H1 (cell line): ENCODE measurements at regions of chr6 and their contacts with region 1.

Region 1: GRCh38 chr6:72218125-72218524 is 331.8 kb downstream of the RIMS1 start:
- DNase-seq: peak; percentile 46 to 61
- H3K4me3 ChIP-seq: no peak overlapping the region
- H3K27ac ChIP-seq: no peak overlapping the region
- H3K4me1 ChIP-seq: no peaks in the 10 kb centered on the region
- H3K27me3 ChIP-seq: no peaks in the 10 kb centered on the region
- CTCF ChIP-seq: peak; percentile 70 to 83 (median 81)
- EP300 ChIP-seq: no peak
- POLR2A ChIP-seq: no peak
- RAD21 ChIP-seq: peak; percentile 59 to 64

Region 2: GRCh38 chr6:72080260-72080941 is 137.7 kb before region 1 on chr6:
- CTCF ChIA-PET with region 1: no interaction called
- POLR2A ChIA-PET with region 1: no interaction called
- DNase-seq: no peak
- H3K4me3 ChIP-seq: no peak overlapping the region
- H3K27ac ChIP-seq: no peak overlapping the region
- H3K4me1 ChIP-seq: peaks cover 0 to 1% (median 0%) of the 10 kb centered on the region in 4 experiments; a peak in 3 of 7 replicates
- H3K27me3 ChIP-seq: no peaks in the 10 kb centered on the region
- CTCF ChIP-seq: no peak
- EP300 ChIP-seq: no peak
- POLR2A ChIP-seq: no peak
- RAD21 ChIP-seq: no peak; a peak in 1 of 4 replicates

Region 3: DNA sequence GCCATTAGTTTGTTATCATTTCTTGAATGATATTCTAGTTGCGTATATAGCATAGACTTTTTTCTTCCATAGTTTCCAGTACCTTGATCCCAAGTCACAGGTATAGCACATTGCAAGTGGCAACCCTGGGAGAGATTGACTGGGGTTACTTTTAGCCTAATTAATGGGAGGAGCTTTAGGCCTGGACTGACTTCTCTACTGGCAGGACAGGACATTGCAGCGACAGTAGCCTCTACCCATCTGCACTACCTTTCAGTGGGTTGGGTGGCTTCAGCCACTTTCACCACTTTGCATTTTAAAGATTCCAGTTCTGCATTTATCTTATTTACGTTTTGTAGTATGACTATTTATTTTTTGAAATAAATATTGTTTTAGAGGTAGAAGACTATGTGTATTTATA is 11.5 kb before region 1 on chr6:
- CTCF ChIA-PET with region 1: interaction called, 26 read pairs
- POLR2A ChIA-PET with region 1: no interaction called
- DNase-seq: no peak
- H3K4me3 ChIP-seq: no peak overlapping the region
- H3K27ac ChIP-seq: no peak overlapping the region
- H3K4me1 ChIP-seq: no peaks in the 10 kb centered on the region
- H3K27me3 ChIP-seq: no peaks in the 10 kb centered on the region
- CTCF ChIP-seq: peak in 1 of 3 experiments; percentile 16; a peak in 1 of 4 replicates
- EP300 ChIP-seq: no peak
- POLR2A ChIP-seq: no peak
- RAD21 ChIP-seq: no peak

Region 4: DNA sequence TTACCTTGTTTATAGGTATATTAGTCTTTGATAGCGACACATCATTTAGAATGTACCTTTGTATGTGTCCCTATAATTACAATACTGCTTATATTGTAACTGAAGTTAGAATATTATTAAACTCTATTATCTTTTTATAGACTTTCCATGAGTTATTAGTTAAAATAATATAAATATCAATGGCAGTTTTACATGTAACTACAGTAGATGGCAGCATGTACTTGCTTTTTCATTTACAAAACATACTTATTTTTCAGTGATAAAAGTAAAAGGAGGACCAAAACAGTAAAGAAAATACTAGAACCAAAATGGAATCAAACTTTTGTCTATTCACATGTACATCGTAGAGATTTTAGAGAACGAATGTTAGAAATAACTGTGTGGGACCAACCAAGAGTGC is 32.5 kb after region 1 on chr6:
- CTCF ChIA-PET with region 1: no interaction called
- POLR2A ChIA-PET with region 1: no interaction called
- DNase-seq: no peak
- H3K4me3 ChIP-seq: no peak overlapping the region
- H3K27ac ChIP-seq: no peak overlapping the region
- H3K4me1 ChIP-seq: peaks cover 0 to 4% (median 0%) of the 10 kb centered on the region in 4 experiments; a peak in 2 of 7 replicates
- H3K27me3 ChIP-seq: no peaks in the 10 kb centered on the region
- CTCF ChIP-seq: no peak
- EP300 ChIP-seq: no peak
- POLR2A ChIP-seq: no peak
- RAD21 ChIP-seq: no peak

Region 5: GRCh38 chr6:72267470-72267869 is 49.3 kb after region 1 on chr6:
- CTCF ChIA-PET with region 1: no interaction called
- POLR2A ChIA-PET with region 1: no interaction called
- DNase-seq: no peak
- H3K4me3 ChIP-seq: no peak overlapping the region
- H3K27ac ChIP-seq: no peak overlapping the region
- H3K4me1 ChIP-seq: no peaks in the 10 kb centered on the region
- H3K27me3 ChIP-seq: no peaks in the 10 kb centered on the region
- CTCF ChIP-seq: no peak
- EP300 ChIP-seq: no peak
- POLR2A ChIP-seq: no peak
- RAD21 ChIP-seq: no peak